WTC11 (cell line): ENCODE measurements at regions of chr1 and their contacts with region 1.

Region 1: GRCh38 chr1:93680757-93681550 is 683 bp downstream of the BCAR3 start:
- DNase-seq: peak; percentile 89
- ATAC-seq: peak; percentile 90
- H3K4me3 Mint-ChIP-seq: peak overlapping the region; percentile 94
- H3K27ac Mint-ChIP-seq: peak overlapping the region; percentile 95
- H3K4me1 Mint-ChIP-seq: peaks cover 36% of the 10 kb centered on the region
- H3K27me3 Mint-ChIP-seq: peaks cover 32% of the 10 kb centered on the region
- CTCF ChIP-seq: no peak

Region 2: GRCh38 chr1:93635614-93636543 is 45.1 kb before region 1 on chr1:
- CTCF ChIA-PET with region 1: interaction called, 18 read pairs
- POLR2A ChIA-PET with region 1: interaction called, 6 read pairs
- DNase-seq: peak; percentile 61
- ATAC-seq: peak; percentile 90
- H3K4me3 Mint-ChIP-seq: peak overlapping the region; percentile 25; the same call in 1 of the 2 replicates
- H3K27ac Mint-ChIP-seq: peak overlapping the region; percentile 97
- H3K4me1 Mint-ChIP-seq: peaks cover 36% of the 10 kb centered on the region
- H3K27me3 Mint-ChIP-seq: no peaks in the 10 kb centered on the region
- CTCF ChIP-seq: no peak

Region 3: DNA sequence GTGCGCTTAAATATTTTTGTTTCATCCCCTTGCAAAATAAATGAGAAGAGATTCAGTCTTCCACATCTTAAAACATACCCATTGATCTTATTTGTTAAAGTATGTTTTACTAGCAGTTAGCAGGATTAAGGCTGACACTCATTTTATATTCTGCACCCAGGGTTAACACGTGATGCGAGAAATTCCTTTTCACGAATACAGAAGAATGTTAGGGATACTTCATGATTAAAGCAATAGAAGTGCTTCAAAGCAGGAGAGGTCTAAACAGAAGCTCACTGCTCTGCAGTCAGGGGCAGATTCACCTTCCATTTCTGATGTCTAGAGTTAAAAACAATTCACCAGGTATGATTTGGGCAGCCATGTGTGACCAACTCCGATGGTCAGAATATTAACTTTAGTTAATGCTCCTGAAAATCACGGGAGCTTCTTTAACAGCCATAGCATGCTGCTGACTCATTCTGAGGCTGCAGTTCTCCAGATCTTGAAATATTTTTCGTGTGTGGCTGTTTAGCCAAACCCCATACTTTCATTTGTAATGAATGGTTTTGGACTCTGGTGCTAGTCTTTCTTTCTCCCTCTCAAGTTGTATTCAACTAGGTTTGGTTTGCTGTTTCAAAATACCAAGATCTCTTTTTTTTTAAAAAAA is 19.0 kb before region 1 on chr1:
- CTCF ChIA-PET with region 1: interaction called, 10 read pairs
- POLR2A ChIA-PET with region 1: no interaction called
- DNase-seq: no peak
- ATAC-seq: no peak
- H3K4me3 Mint-ChIP-seq: no peak overlapping the region
- H3K27ac Mint-ChIP-seq: peak overlapping the region; percentile 25
- H3K4me1 Mint-ChIP-seq: peaks cover 51% of the 10 kb centered on the region
- H3K27me3 Mint-ChIP-seq: no peaks in the 10 kb centered on the region
- CTCF ChIP-seq: no peak